CD4-positive, alpha-beta T cell (primary cell): ENCODE measurements at regions of chr16 and their contacts with region 1.

Region 1: DNA sequence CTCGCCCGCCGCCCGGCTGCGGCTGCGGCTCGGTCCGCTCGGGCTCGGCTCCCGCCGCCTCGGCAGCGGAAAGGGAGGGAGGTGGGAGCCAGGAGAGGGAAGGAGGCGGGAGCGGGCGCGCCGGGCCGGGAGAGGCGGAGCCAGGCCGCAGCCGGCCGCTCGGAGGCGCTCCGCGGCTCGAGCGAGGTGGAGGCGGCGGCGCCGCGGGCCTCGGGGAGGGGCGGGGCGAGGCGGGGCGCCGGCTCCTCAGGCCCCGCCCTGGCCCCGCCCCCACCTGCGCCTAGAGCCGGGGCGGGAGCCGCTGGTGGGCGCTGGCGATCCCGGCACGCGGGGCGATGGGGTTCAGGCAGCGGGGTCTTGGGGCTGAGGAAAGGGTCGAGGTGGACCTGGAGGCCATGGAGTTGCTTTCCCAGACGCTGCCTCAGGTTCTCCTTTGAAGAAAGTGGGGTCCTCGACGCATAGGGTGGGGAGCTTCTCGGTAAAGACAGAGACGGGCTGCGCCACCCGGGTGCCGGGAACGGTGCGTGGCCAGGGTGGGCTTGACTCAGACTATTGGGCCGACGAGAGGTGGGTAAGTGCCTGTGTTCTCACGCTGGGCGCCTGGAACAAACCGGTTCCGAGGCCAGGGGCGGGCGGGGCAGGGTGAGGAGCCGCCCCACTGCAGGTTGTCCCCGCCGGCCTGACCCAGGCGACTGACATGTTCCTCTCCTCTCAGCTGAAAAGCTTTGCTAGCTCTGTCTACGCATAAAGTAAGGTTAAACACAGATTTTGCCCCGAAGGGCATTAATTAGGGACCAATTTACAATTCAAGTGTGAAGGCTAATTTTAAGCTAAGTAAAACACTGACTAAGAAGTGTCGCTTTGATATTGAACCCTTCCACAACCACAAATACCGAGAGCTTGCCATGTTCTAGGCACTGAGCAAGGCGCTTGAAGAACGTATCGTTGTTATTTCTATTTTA is at the start of gene CMTM4:
- DNase-seq: peak; percentile 42 to 92 (median 72)
- ATAC-seq: peak; percentile 95
- H3K4me3 ChIP-seq: peak within 1 kb of the TSS; percentile 73
- H3K4me3 Mint-ChIP-seq: peak within 1 kb of the TSS; percentile 90
- H3K27ac ChIP-seq: no peak within 1 kb of the TSS
- H3K27ac Mint-ChIP-seq: peak within 1 kb of the TSS; percentile 63
- H3K4me1 ChIP-seq: peaks cover 16% of the 10 kb centered on the region
- H3K4me1 Mint-ChIP-seq: peaks cover 14% of the 10 kb centered on the region
- H3K27me3 ChIP-seq: peaks cover 0 to 4% of the 10 kb centered on the region in 2 experiments
- H3K27me3 Mint-ChIP-seq: peaks cover 4% of the 10 kb centered on the region
- CTCF ChIP-seq: no peak
- total RNA-seq, gene CMTM4: 1.1 to 1.6 TPM

Region 2: GRCh38 chr16:66751303-66751991 is 54.5 kb after region 1 on chr16 and contains the start of gene DYNC1LI2:
- CTCF ChIA-PET with region 1: interaction called, 3 read pairs
- POLR2A ChIA-PET with region 1: interaction called, 8 read pairs
- intact Hi-C with region 1: loop called in 1 of 2 experiments (anchors 1 kb)
- DNase-seq: peak; percentile 66 to 92 (median 78)
- ATAC-seq: peak; percentile 94
- H3K4me3 ChIP-seq: peak within 1 kb of the TSS; percentile 81
- H3K4me3 Mint-ChIP-seq: peak within 1 kb of the TSS; percentile 94
- H3K27ac ChIP-seq: peak within 1 kb of the TSS in 1 of 2 donors; percentile 66
- H3K27ac Mint-ChIP-seq: peak within 1 kb of the TSS; percentile 91
- H3K4me1 ChIP-seq: peaks cover 32% of the 10 kb centered on the region
- H3K4me1 Mint-ChIP-seq: peaks cover 37% of the 10 kb centered on the region
- H3K27me3 ChIP-seq: no peaks in the 10 kb centered on the region
- H3K27me3 Mint-ChIP-seq: peaks cover 19% of the 10 kb centered on the region
- CTCF ChIP-seq: peak; percentile 67
- total RNA-seq, gene DYNC1LI2: 81.8 to 82.4 TPM